Heart left ventricle (tissue), 16 donors: ENCODE measurements at regions of chr2 and their contacts with region 1.

Region 1: GRCh38 chr2:126776692-126777619 is 121.0 kb downstream of the GYPC start:
- DNase-seq: peak; percentile 78 to 92 (median 86)
- ATAC-seq: peak; percentile 88 to 95 (median 91)
- H3K4me3 ChIP-seq: peak overlapping the region; percentile 50 to 85 (median 66)
- H3K27ac ChIP-seq: peak overlapping the region; percentile 24 to 83 (median 75)
- H3K4me1 ChIP-seq: peaks cover 0 to 11% (median 0%) of the 10 kb centered on the region in 12 donors
- H3K27me3 ChIP-seq: peaks cover 0 to 15% (median 0%) of the 10 kb centered on the region in 9 donors
- CTCF ChIP-seq: peak; percentile 88 to 99 (median 95)
- POLR2A ChIP-seq: no peak

Region 2: DNA sequence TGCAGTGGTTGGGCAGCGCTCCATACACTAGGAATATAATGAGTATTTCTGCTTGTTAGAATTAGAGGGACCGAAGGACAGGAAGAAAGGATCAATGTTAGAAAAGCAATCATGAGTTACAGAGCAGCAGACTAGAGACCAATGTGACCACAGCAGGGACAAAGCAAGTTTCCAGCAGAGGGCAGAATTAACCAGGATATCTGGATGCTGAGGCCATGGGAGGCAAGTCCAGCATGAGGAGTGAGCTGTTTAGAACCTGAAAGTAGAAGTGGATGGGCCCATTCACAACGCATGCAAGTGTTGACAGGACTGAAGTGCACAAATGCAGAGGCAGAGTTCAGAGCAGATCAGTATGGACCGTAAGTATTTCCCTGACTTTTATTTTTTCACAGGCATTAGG is 1031.4 kb before region 1 on chr2:
- intact Hi-C with region 1: loop called in 6 of 10 experiments (anchors 1 to 10 kb)
- DNase-seq: no peak
- ATAC-seq: peak; percentile 32 to 77 (median 61)
- H3K4me3 ChIP-seq: no peak overlapping the region
- H3K27ac ChIP-seq: no peak overlapping the region
- H3K4me1 ChIP-seq: no peaks in the 10 kb centered on the region
- H3K27me3 ChIP-seq: no peaks in the 10 kb centered on the region
- CTCF ChIP-seq: peak in 7 of 12 donors; percentile 18 to 55 (median 44)
- POLR2A ChIP-seq: no peak

Region 3: GRCh38 chr2:126359494-126359893 is 417.5 kb before region 1 on chr2:
- intact Hi-C with region 1: loop called in 3 of 10 experiments (anchors 5 to 10 kb)
- DNase-seq: no peak
- ATAC-seq: no peak
- H3K4me3 ChIP-seq: no peak overlapping the region
- H3K27ac ChIP-seq: no peak overlapping the region
- H3K4me1 ChIP-seq: no peaks in the 10 kb centered on the region
- H3K27me3 ChIP-seq: no peaks in the 10 kb centered on the region
- CTCF ChIP-seq: peak in 10 of 12 donors; percentile 5 to 47 (median 14)
- POLR2A ChIP-seq: no peak

Region 4: GRCh38 chr2:126527836-126528507 is 249.0 kb before region 1 on chr2:
- intact Hi-C with region 1: loop called (anchors 1 to 2 kb)
- DNase-seq: peak; percentile 62 to 83 (median 71)
- ATAC-seq: peak in 3 of 4 donors; percentile 71 to 88 (median 84)
- H3K4me3 ChIP-seq: no peak overlapping the region
- H3K27ac ChIP-seq: no peak overlapping the region
- H3K4me1 ChIP-seq: no peaks in the 10 kb centered on the region
- H3K27me3 ChIP-seq: no peaks in the 10 kb centered on the region
- CTCF ChIP-seq: peak; percentile 53 to 79 (median 68)
- POLR2A ChIP-seq: no peak

Region 5: DNA sequence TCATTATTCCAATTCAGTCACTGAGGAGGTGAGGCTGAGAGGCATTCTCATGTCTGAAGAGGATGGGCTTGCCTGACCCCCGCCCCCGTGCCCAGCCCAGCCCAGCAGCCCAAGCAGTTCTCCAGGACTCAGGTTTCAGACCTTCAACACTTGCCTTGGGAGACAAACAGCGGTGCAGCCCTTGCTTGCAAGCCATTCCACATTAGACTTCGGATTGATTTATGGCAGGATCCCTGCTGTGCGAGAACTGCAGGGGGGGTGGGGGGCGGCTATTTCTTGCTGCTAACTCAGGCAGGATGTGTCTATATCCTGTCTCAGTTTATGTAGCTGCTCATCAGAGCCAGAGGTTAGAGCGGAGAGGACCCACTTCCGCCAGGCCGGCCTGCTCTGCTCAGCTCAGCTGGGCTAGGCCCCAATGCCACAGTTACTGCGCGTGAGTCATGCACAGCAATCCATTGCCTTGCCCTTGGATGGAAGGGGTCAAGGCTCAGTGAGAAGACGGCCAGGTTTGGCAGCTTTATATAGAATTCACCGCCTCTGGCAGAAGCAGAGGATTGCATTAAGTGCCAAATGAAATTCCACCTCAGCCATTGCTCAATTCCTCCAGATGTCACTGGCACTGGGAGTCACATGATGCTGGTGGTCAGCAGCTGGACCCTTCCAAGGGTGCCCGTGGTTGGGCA is 119.2 kb before region 1 on chr2:
- intact Hi-C with region 1: loop called in 8 of 10 experiments (anchors 2 to 10 kb)
- DNase-seq: peak; percentile 77 to 95 (median 90)
- ATAC-seq: peak; percentile 62 to 86 (median 79)
- H3K4me3 ChIP-seq: peak overlapping the region; percentile 67 to 94 (median 77)
- H3K27ac ChIP-seq: peak overlapping the region; percentile 96 to 100 (median 98)
- H3K4me1 ChIP-seq: peaks cover 17 to 74% (median 70%) of the 10 kb centered on the region in 12 donors
- H3K27me3 ChIP-seq: no peaks in the 10 kb centered on the region
- CTCF ChIP-seq: peak in 1 of 12 donors; percentile 21
- POLR2A ChIP-seq: peak in 1 of 2 donors; percentile 61